AG04449 (cell line): ENCODE measurements at regions of chr15 and their contacts with region 1.

Region 1: DNA sequence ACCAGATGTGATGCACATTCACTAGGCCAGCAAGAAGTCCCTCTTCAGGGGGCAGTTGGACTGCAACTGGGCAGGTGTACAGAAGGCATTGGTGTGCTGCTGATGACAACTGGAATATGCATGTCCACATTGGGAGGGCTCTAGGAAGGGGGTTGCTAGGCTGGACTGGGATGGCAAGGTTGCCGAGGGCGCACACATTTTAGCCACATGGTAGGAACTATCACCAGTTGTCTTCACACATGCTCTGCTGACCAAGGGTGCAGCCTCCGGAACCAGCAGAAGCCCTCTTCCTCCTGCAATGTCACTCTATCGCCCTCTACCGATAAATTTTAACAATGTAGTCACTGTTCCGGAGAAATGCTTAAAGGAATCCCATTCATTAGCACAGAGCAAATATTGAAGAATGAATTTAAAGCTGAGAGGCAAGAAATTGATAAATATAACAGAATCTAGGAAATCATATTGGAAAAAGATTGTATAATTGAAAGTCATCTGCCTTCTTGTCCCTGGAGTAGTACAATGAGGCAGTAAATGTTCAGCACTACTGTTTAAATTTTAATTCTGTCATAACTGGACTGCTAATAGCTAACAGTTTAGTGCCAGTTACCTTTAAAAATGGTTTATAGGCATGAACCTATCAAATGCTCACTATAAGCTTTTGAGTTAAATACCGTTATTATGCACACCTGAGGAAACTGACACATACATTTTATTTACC is 22.6 kb upstream of the LYSMD4 start:
- DNase-seq: peak; percentile 12
- H3K4me3 ChIP-seq: no peak overlapping the region
- CTCF ChIP-seq: peak; percentile 69

Region 2: GRCh38 chr15:99250494-99251435 is 505.1 kb before region 1 on chr15:
- CTCF ChIA-PET with region 1: interaction called, 22 read pairs
- POLR2A ChIA-PET with region 1: no interaction called
- DNase-seq: peak; percentile 88
- H3K4me3 ChIP-seq: peak overlapping the region; percentile 86
- CTCF ChIP-seq: no peak

Region 3: DNA sequence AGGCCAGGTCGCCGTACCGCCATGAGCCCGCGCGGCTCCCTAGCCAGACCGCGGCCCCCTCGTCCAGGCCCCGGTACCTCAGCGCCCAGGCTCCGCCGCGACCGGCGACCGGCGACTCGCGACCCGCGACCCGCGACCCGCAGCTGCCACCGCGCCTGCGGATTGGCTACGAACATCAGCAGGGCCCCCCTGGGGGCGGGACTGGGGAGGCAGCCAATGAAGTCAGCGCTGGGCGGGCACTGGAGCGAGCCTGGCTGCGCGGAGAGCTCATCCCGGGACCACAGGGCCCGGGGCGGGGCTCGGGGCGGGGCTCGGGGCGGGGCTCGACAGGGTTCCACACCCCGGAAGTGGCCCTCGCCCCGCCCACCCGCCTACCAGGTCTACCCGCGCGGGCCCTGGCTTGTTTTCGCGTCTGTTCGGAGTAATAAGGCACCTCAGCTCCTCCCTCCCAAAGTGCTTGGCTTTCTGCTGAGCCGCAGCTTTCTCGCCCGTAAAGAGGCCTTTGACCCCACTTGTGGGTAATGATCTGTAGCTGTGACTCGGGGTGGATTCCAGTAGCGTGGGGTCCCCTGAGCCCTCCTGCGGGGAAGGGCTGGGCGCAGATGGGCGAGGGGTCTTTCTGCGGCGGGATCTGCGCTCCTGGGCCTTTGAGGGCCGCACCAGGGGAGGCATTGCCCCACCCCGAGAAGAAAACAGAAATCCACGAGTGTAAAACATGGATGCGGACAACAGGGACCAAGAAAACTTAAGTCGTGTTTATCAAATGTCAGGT is 22.4 kb before region 1 on chr15 and contains the start of gene LYSMD4:
- CTCF ChIA-PET with region 1: interaction called, 80 read pairs
- POLR2A ChIA-PET with region 1: no interaction called
- DNase-seq: peak; percentile 28
- H3K4me3 ChIP-seq: peak within 1 kb of the TSS; percentile 75
- CTCF ChIP-seq: no peak

Region 4: DNA sequence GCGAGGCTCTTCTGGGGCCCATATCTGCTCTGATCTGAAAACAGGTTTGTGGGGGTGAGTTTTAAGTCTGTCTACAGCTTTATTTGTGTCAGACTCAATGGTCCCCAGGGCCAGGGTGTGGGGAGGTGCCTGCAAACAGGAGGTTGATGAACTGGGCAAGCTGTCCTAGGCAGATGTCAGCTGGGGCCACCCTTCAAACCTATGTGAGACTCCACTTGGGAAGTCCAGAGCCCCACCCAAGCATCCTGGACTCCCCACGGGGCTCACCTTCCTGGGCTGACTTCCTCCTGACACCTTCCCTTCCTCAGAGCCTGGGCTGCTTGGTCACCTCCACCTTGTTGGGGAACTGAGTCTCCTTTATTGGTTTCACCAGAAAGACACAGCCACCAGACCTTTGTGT is 14.0 kb before region 1 on chr15:
- CTCF ChIA-PET with region 1: interaction called, 80 read pairs
- POLR2A ChIA-PET with region 1: no interaction called
- DNase-seq: no peak
- H3K4me3 ChIP-seq: no peak overlapping the region
- CTCF ChIP-seq: no peak

Region 5: DNA sequence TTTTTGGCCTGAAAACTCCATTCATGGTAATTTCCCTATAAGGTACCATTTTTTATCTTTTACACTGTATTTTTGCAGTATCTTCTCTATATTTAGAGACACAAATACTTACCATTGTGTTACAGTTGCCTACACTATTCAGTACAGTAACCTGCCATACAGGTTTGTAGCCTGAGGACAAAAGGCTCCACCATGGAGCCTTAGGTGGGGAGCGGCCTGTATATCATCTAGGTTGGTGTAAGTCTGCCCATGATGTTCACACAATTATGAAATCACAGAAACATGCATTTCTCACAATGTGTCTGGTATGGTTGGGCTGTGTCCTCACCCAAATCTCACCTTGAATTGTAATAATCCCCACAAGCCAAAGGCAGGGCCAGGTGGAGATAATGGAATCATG is 21.3 kb after region 1 on chr15:
- CTCF ChIA-PET with region 1: interaction called, 12 read pairs
- POLR2A ChIA-PET with region 1: no interaction called
- DNase-seq: no peak
- H3K4me3 ChIP-seq: no peak overlapping the region
- CTCF ChIP-seq: no peak